HEK293 (cell line): ENCODE measurements at regions of chr19 and their contacts with region 1.

Region 1: DNA sequence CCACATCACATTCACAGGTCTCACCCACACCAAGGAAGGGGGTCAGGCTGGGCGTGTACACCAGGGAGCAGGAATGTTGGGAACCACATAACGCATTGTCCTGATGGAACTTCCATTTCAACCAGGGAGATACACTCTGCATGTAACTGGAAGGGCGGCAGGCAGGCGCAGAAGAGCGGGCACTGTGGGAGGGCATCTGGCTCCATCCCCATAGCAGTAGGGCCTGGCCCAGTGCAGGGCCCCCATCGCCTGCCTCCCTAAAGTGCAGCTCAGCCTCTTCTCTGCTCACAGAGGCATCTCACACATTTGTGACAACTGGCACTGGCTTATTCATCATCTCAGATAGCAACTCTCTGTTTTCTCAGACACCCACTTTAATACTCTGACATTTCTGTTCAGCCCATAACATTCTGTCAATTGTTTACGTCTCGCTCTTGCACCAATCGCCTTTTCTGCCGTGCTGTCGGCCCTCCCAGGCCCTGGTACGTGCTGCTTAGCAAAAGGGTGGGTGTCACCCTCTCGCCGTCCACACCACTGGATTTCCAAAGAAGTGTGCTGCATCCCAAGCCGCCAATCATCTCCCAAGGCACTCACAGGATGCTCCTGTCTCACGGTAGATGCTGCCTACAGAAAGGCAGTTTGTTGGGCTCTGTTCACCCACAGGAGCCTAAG is 353.3 kb upstream of the ZNF507 start:
- H3K4me3 ChIP-seq: no peak overlapping the region
- H3K27ac ChIP-seq: no peak overlapping the region
- H3K4me1 ChIP-seq: no peaks in the 10 kb centered on the region
- CTCF ChIP-seq: no peak

Region 2: DNA sequence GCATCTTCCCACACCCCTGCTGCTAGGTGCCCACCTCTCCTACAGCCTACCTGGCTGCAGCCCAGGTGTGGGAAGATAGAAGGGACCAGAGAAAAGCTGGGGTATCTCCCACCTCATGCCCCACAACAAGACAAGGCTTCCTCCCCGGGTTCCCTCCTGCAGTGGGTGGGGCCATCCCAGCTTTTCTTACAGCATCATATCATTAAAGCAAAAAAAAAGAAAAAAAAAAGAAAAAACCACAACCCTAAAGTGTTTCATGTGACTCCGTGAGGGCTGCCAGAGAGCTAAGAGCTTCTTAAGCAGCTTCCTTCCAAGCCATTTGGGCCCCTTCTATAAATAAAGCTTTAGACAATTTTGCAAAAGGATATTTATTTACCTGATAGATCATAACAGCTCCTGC is 187.5 kb before region 1 on chr19:
- CTCF ChIA-PET with region 1: no interaction called
- POLR2A ChIA-PET with region 1: interaction called, 10 read pairs
- H3K4me3 ChIP-seq: no peak overlapping the region
- H3K27ac ChIP-seq: no peak overlapping the region
- H3K4me1 ChIP-seq: 0 out of 2 replicates have a peak, but pooled peaks cover 2% of the 10 kb centered on the region
- CTCF ChIP-seq: no peak